ENCODE measurements at regions of chr7 and their contacts with region 1.

Region 1: GRCh38 chr7:151759591-151760042 is 117.3 kb downstream of the PRKAG2 start:
- DNase-seq: peak; percentile 31 to 79 (median 47)
- ATAC-seq: peak; percentile 46
- H3K4me3 ChIP-seq: no peak overlapping the region
- H3K4me3 Mint-ChIP-seq: no peak overlapping the region
- H3K27ac ChIP-seq: no peak overlapping the region
- H3K27ac Mint-ChIP-seq: peak overlapping the region; percentile 67
- H3K4me1 ChIP-seq: peaks cover 35% of the 10 kb centered on the region
- H3K4me1 Mint-ChIP-seq: peaks cover 40% of the 10 kb centered on the region
- H3K27me3 ChIP-seq: no peaks in the 10 kb centered on the region
- H3K27me3 Mint-ChIP-seq: no peaks in the 10 kb centered on the region
- CTCF ChIP-seq: peak; percentile 97

Region 2: GRCh38 chr7:151315038-151315655 is 444.5 kb before region 1 on chr7:
- CTCF ChIA-PET with region 1: no interaction called
- POLR2A ChIA-PET with region 1: no interaction called
- intact Hi-C with region 1: loop called in 1 of 2 experiments (anchors 2 kb)
- DNase-seq: peak; percentile 60 to 90 (median 74)
- ATAC-seq: peak; percentile 95
- H3K4me3 ChIP-seq: no peak overlapping the region
- H3K4me3 Mint-ChIP-seq: no peak overlapping the region
- H3K27ac ChIP-seq: no peak overlapping the region
- H3K27ac Mint-ChIP-seq: no peak overlapping the region
- H3K4me1 ChIP-seq: peaks cover 9% of the 10 kb centered on the region
- H3K4me1 Mint-ChIP-seq: peaks cover 9% of the 10 kb centered on the region
- H3K27me3 ChIP-seq: no peaks in the 10 kb centered on the region
- H3K27me3 Mint-ChIP-seq: no peaks in the 10 kb centered on the region
- CTCF ChIP-seq: peak; percentile 93

Region 3: GRCh38 chr7:151368136-151368571 is 391.5 kb before region 1 on chr7:
- CTCF ChIA-PET with region 1: no interaction called
- POLR2A ChIA-PET with region 1: no interaction called
- intact Hi-C with region 1: loop called in 1 of 2 experiments (anchors 2 kb)
- DNase-seq: peak; percentile 59 to 88 (median 68)
- ATAC-seq: peak; percentile 97
- H3K4me3 ChIP-seq: no peak overlapping the region
- H3K4me3 Mint-ChIP-seq: no peak overlapping the region
- H3K27ac ChIP-seq: no peak overlapping the region
- H3K27ac Mint-ChIP-seq: peak overlapping the region; percentile 25
- H3K4me1 ChIP-seq: peaks cover 8% of the 10 kb centered on the region
- H3K4me1 Mint-ChIP-seq: peaks cover 6% of the 10 kb centered on the region
- H3K27me3 ChIP-seq: no peaks in the 10 kb centered on the region
- H3K27me3 Mint-ChIP-seq: no peaks in the 10 kb centered on the region
- CTCF ChIP-seq: peak; percentile 96

Region 4: DNA sequence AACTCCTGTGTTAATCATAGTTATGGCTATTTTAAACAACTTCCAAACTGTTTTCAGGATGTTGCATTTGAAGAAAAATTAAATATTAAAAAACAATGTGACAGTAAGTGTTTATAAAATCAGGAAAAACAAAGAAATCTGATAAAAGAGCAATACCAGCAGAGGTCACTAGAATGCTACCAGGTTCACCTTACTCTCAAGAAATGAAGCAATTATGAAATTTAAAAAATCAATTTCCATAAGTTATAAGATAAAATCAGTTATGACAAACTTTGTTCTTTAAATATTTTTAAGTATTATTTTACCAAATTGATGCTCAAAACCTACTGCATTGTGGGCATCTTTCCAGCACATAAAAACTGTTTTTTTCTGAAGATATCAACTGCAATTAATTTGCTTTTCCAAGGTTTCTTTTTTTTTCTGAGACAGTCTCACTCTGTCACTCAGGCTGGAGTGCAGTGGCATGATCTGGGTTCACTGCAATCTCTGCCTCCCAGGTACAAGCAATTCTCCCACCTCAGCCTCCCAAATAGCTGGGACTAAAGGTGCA is 189.2 kb before region 1 on chr7:
- CTCF ChIA-PET with region 1: no interaction called
- POLR2A ChIA-PET with region 1: no interaction called
- intact Hi-C with region 1: loop called (anchors 1 to 2 kb)
- DNase-seq: peak in 2 of 14 experiments; percentile 24 to 32
- ATAC-seq: no peak
- H3K4me3 ChIP-seq: no peak overlapping the region
- H3K4me3 Mint-ChIP-seq: no peak overlapping the region
- H3K27ac ChIP-seq: no peak overlapping the region
- H3K27ac Mint-ChIP-seq: no peak overlapping the region
- H3K4me1 ChIP-seq: no peaks in the 10 kb centered on the region
- H3K4me1 Mint-ChIP-seq: no peaks in the 10 kb centered on the region
- H3K27me3 ChIP-seq: no peaks in the 10 kb centered on the region
- H3K27me3 Mint-ChIP-seq: no peaks in the 10 kb centered on the region
- CTCF ChIP-seq: peak; percentile 49

Region 5: DNA sequence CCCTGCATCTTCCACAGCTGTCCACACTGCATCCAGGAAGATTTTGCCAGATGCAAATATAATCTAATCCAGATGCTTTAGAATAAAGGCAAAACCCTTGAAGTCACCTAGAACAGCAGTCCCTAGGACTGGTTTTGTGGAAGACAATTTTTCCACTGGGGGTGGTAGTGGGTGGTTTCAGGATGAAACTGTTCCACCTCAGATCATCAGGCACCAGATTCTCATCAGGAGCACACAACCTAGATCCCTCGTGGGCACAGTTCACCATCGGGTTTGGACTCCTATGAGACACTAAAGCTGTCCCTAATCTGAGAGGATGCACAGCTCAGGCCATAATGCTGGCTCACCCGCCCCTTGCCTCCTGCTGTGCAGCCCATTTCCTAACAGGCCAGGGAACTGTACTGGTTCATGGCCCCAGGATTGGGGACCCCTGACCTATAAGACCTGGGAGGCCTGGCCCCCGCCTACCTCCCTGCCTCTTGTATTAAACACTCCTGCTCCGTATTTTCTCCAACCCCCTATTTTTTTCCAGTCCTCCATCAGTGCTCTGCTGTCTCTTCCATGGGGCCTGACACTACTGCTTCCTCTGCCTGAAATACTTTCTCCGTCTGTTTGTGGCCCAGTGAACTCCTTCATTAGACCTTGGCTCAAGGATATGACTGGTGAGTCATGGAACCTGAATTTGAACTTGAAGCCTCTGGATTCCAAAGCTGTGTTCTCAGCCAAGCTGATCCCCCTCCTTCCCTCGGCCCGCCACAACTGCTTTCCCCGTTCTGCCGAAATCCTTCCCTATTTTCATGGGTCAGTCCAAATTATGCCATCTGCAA is 160.0 kb before region 1 on chr7:
- CTCF ChIA-PET with region 1: no interaction called
- POLR2A ChIA-PET with region 1: no interaction called
- intact Hi-C with region 1: no loop called
- DNase-seq: no peak
- ATAC-seq: no peak
- H3K4me3 ChIP-seq: no peak overlapping the region
- H3K4me3 Mint-ChIP-seq: no peak overlapping the region
- H3K27ac ChIP-seq: no peak overlapping the region
- H3K27ac Mint-ChIP-seq: no peak overlapping the region
- H3K4me1 ChIP-seq: no peaks in the 10 kb centered on the region
- H3K4me1 Mint-ChIP-seq: peaks cover 16% of the 10 kb centered on the region
- H3K27me3 ChIP-seq: no peaks in the 10 kb centered on the region
- H3K27me3 Mint-ChIP-seq: no peaks in the 10 kb centered on the region
- CTCF ChIP-seq: no peak

Region 6: DNA sequence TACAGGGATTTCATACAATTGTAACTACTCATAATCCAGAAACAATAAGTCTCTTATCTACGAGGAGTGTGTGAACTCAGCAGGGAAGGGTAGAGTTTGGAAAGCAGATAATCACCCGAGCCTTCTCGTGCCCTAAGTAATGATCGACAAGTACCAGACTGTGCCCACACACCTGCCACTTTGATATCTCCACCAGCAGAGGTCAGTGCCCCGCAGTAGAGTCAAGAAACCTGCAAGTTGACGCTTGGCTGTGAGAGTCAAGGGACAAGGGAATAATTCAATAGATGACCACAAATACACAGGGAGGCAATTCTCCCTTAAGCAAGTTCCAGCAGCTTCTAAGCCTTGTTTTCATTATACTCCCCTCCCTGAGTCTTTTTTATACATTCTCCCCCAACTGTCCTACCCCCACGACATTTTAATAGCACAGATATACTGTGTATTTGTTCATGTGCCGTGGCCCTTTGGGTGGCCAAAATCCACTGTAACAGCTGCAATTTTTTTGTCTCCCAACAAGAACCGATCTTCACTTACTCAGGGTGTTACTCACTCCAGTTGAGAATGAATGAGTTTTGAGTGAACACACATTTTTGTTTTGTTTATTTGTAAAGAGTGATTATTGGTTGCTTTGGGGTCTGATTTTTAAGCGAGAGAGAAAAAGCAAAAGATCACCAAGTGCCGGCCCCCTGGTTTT is 133.0 kb before region 1 on chr7:
- CTCF ChIA-PET with region 1: interaction called, 4 read pairs
- POLR2A ChIA-PET with region 1: no interaction called
- intact Hi-C with region 1: loop called (anchors 1 to 2 kb)
- DNase-seq: peak in 10 of 14 experiments; percentile 6 to 62 (median 23)
- ATAC-seq: peak; percentile 64
- H3K4me3 ChIP-seq: no peak overlapping the region
- H3K4me3 Mint-ChIP-seq: peak overlapping the region; percentile 16
- H3K27ac ChIP-seq: no peak overlapping the region
- H3K27ac Mint-ChIP-seq: no peak overlapping the region
- H3K4me1 ChIP-seq: peaks cover 13% of the 10 kb centered on the region
- H3K4me1 Mint-ChIP-seq: peaks cover 65% of the 10 kb centered on the region
- H3K27me3 ChIP-seq: no peaks in the 10 kb centered on the region
- H3K27me3 Mint-ChIP-seq: no peaks in the 10 kb centered on the region
- CTCF ChIP-seq: peak; percentile 35

Region 7: DNA sequence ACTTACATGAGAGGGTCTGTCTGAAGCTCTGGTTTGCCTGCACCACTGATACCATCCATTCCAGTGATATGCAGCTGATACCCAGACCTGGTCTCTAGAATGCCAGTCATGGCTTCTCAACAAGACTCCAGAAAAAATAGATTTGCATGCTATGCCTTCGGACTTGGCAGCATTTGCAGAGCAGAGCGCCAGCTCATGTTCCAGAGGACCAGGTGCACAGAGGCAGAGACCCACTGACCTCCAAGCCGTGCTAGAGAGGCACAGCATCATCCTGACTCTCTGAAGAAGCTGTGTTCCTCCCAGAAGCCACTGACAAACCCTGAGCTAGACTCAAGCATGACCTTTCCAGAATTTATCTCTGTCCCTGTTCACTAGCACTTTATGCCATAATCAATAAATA is 124.2 kb after region 1 on chr7:
- CTCF ChIA-PET with region 1: no interaction called
- POLR2A ChIA-PET with region 1: no interaction called
- intact Hi-C with region 1: no loop called
- DNase-seq: no peak
- ATAC-seq: no peak
- H3K4me3 ChIP-seq: no peak overlapping the region
- H3K4me3 Mint-ChIP-seq: no peak overlapping the region
- H3K27ac ChIP-seq: no peak overlapping the region
- H3K27ac Mint-ChIP-seq: no peak overlapping the region
- H3K4me1 ChIP-seq: no peaks in the 10 kb centered on the region
- H3K4me1 Mint-ChIP-seq: no peaks in the 10 kb centered on the region
- H3K27me3 ChIP-seq: no peaks in the 10 kb centered on the region
- H3K27me3 Mint-ChIP-seq: peaks cover 18% of the 10 kb centered on the region
- CTCF ChIP-seq: no peak

Region 8: GRCh38 chr7:151936207-151936606 is 176.6 kb after region 1 on chr7:
- CTCF ChIA-PET with region 1: no interaction called
- POLR2A ChIA-PET with region 1: no interaction called
- intact Hi-C with region 1: loop called in 1 of 2 experiments (anchors 10 kb)
- DNase-seq: peak in 3 of 14 experiments; percentile 76 to 84 (median 77)
- ATAC-seq: peak; percentile 88
- H3K4me3 ChIP-seq: peak overlapping the region; percentile 38
- H3K4me3 Mint-ChIP-seq: peak overlapping the region; percentile 87
- H3K27ac ChIP-seq: peak overlapping the region; percentile 49 to 80
- H3K27ac Mint-ChIP-seq: peak overlapping the region; percentile 89
- H3K4me1 ChIP-seq: peaks cover 18% of the 10 kb centered on the region
- H3K4me1 Mint-ChIP-seq: peaks cover 25% of the 10 kb centered on the region
- H3K27me3 ChIP-seq: no peaks in the 10 kb centered on the region
- H3K27me3 Mint-ChIP-seq: no peaks in the 10 kb centered on the region
- CTCF ChIP-seq: no peak